ENCODE measurements at regions of chr5 and their contacts with region 1.

Region 1: GRCh38 chr5:172481858-172482714 is 27.8 kb upstream of the SH3PXD2B start:
- DNase-seq: no peak
- ATAC-seq: no peak
- H3K4me3 ChIP-seq: no peak overlapping the region
- H3K27ac ChIP-seq: no peak overlapping the region
- H3K4me1 ChIP-seq: peaks cover 5% of the 10 kb centered on the region
- H3K27me3 ChIP-seq: no peaks in the 10 kb centered on the region
- CTCF ChIP-seq: no peak

Region 2: DNA sequence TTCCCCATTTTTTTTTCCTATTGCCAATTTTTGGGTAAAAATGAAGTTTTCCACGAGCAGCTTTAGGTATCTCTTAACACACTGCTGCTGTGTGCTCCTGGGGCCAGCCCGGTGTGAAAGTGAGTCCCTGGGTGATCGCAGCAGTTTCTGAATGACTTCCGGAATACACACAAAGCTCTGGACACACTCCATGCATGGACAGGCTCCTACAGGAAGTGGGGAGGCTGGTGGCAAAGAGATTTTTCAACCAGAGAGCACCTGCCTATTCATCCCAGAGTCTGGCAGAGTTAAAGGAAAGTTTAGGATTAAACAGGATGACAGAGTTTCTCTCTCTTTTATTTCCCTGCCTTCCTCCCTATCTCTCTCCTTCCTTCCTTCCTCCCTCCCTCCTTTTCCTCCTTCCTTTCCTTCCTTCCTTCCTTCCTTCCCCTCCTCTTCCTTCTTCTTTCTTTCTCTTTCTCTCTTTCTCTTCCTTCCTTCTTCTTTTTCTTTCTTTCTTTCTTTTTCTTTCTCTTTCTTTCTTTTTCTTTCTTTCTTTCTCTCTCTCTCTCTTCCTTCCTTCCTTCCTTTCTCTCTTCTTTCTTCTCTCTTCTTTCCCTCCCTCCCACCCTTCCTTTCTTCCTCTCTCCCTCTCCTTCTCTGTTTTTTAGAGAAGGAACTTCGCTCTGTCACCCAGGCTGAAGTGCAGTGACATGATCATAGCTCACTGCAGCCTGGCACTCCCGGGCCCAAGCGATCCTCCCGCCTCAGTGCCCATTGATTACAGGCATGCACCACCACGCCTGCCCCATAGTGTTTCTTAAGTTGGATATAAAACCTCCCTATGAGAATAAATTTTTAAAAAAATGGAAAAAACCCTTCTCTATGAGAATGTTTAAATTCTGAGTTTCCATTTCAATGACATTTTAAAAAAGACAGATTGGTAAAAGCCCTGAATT is 159.8 kb before region 1 on chr5:
- intact Hi-C with region 1: no loop called
- DNase-seq: no peak
- ATAC-seq: peak in 1 of 2 donors; percentile 44
- H3K4me3 ChIP-seq: no peak overlapping the region
- H3K27ac ChIP-seq: no peak overlapping the region
- H3K4me1 ChIP-seq: no peaks in the 10 kb centered on the region
- H3K27me3 ChIP-seq: no peaks in the 10 kb centered on the region
- CTCF ChIP-seq: no peak

Region 3: DNA sequence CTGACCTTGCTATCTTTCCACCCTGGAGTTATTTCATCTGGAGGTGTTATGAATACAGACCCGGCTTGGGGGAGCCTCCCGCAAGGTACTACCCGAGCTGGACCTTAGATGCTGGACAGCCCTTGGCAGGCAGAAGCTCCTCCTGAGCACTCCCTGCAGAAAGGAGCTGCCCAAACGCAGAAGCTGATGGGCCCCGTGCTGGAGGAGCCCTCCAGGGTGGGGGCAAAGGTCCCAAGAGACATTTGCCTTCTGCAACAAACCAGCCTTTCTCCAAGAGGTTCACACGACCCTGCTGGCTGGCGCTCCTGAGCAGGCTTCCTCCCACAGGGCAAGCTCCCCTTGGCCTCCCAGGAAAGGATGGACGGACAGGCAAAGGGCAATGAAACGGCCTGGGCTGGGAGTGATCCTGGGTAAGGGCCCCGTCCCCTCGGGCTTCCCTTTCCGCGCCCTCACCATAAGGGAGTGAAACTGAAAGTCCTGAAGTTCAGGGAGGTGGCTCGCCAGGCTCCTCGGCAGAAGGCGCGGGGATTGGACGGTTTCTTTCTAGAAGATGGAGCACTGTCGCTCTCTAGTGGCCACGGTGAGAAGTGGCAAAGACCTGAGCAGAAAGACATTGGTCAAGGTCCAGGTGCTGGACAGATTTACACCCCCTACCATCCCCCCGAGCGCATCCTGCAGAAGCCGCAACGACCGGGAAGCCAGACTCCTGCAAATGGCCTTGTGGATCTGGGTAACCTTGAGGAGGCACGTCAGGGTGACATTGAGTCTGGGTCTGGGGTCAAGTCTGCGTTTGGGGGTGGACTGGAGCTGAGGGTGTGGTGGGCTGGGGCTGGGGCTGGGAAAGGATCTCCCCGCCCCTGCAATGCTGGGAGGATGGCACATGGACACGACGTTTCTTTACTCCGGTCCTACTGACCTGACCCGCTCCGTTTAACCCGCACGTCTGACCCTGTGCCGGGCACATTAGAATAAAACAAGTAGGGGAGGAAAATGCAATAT is 215.3 kb after region 1 on chr5:
- intact Hi-C with region 1: loop called (anchors 5 kb)
- DNase-seq: peak; percentile 93
- ATAC-seq: peak; percentile 91 to 92
- H3K4me3 ChIP-seq: peak overlapping the region; percentile 68
- H3K27ac ChIP-seq: peak overlapping the region; percentile 88
- H3K4me1 ChIP-seq: peaks cover 54% of the 10 kb centered on the region
- H3K27me3 ChIP-seq: no peaks in the 10 kb centered on the region
- CTCF ChIP-seq: peak; percentile 91